ENCODE measurements at regions of chr12 and their contacts with region 1.

Region 1: DNA sequence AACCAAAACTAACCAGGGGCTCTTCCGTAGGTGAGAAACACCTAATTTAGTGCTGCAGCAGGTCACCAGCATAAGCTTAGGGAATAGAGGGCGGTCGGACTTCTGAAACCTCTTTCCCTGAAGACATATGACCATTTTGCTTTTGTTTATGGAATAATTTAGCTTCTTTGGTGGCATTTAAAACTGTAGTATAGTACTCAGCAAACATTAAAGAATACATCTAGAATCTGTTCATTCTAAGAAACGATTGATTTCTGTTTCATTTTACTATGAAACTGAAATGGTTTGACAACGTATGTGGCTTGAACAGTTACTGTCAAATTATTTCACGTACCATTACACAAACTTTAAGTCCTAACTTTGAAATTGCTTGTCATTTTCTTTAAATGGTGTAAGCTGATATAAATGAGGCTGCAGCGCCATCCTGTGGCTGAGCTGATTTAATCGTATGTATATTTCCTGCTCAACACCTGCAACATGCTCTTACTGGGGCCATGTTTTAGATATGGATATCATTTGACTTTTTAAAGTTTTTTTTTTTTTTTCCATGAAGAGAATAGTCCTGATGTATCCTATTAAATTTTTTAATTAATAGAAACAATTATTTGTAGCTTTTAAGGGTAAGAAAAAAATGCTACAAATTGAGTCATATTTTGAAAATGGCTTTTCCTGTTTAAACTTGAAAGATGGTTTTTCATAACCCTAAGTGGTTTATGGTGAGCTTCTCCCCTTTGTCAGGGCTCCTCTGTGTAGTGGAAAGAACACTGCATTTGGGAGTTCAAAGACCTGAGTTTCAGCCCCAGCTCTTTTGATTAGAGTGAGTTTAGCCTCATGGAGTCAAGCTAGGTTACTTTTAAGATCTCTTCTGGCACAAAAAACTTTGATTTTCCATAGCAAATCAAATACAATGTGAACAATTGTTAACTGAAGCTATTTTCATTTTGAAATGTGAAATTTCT is 27.4 kb downstream of the CFAP54 start:
- DNase-seq: peak; percentile 87
- ATAC-seq: peak; percentile 65
- H3K4me3 ChIP-seq: peak overlapping the region in 1 of 5 experiments; percentile 22
- H3K4me3 Mint-ChIP-seq: no peak overlapping the region
- H3K27ac ChIP-seq: no peak overlapping the region
- H3K27ac Mint-ChIP-seq: no peak overlapping the region
- H3K4me1 ChIP-seq: peaks cover 14 to 16% of the 10 kb centered on the region in 2 donors
- H3K4me1 Mint-ChIP-seq: peaks cover 21% of the 10 kb centered on the region
- H3K27me3 ChIP-seq: no peaks in the 10 kb centered on the region
- H3K27me3 Mint-ChIP-seq: no peaks in the 10 kb centered on the region
- CTCF ChIP-seq: peak; percentile 84

Region 2: GRCh38 chr12:95918194-95918993 is 598.4 kb before region 1 on chr12:
- CTCF ChIA-PET with region 1: interaction called, 47 read pairs
- POLR2A ChIA-PET with region 1: no interaction called
- intact Hi-C with region 1: loop called (anchors 1 kb)
- DNase-seq: peak; percentile 70
- ATAC-seq: peak; percentile 90
- H3K4me3 ChIP-seq: no peak overlapping the region
- H3K4me3 Mint-ChIP-seq: no peak overlapping the region
- H3K27ac ChIP-seq: no peak overlapping the region
- H3K27ac Mint-ChIP-seq: no peak overlapping the region
- H3K4me1 ChIP-seq: peaks cover 4% of the 10 kb centered on the region in 2 donors
- H3K4me1 Mint-ChIP-seq: no peaks in the 10 kb centered on the region
- H3K27me3 ChIP-seq: peaks cover 0 to 2% (median 0%) of the 10 kb centered on the region in 4 experiments
- H3K27me3 Mint-ChIP-seq: peaks cover 3% of the 10 kb centered on the region
- CTCF ChIP-seq: peak; percentile 88

Region 3: GRCh38 chr12:96208801-96209549 is 307.8 kb before region 1 on chr12:
- CTCF ChIA-PET with region 1: interaction called, 79 read pairs
- POLR2A ChIA-PET with region 1: interaction called, 4 read pairs
- intact Hi-C with region 1: no loop called
- DNase-seq: peak; percentile 81
- ATAC-seq: peak; percentile 87
- H3K4me3 ChIP-seq: peak overlapping the region in 1 of 5 experiments; percentile 34
- H3K4me3 Mint-ChIP-seq: peak overlapping the region; percentile 81
- H3K27ac ChIP-seq: peak overlapping the region; percentile 46 to 68
- H3K27ac Mint-ChIP-seq: peak overlapping the region; percentile 90
- H3K4me1 ChIP-seq: peaks cover 95 to 98% of the 10 kb centered on the region in 2 donors
- H3K4me1 Mint-ChIP-seq: peaks cover 91% of the 10 kb centered on the region
- H3K27me3 ChIP-seq: no peaks in the 10 kb centered on the region
- H3K27me3 Mint-ChIP-seq: no peaks in the 10 kb centered on the region
- CTCF ChIP-seq: no peak

Region 4: GRCh38 chr12:96274331-96274730 is 242.4 kb before region 1 on chr12:
- CTCF ChIA-PET with region 1: interaction called, 6 read pairs
- POLR2A ChIA-PET with region 1: no interaction called
- intact Hi-C with region 1: loop called (anchors 10 kb)
- DNase-seq: no peak
- ATAC-seq: no peak
- H3K4me3 ChIP-seq: no peak overlapping the region
- H3K4me3 Mint-ChIP-seq: no peak overlapping the region
- H3K27ac ChIP-seq: peak overlapping the region in 1 of 2 donors; percentile 35
- H3K27ac Mint-ChIP-seq: no peak overlapping the region
- H3K4me1 ChIP-seq: no peaks in the 10 kb centered on the region
- H3K4me1 Mint-ChIP-seq: peaks cover 13% of the 10 kb centered on the region
- H3K27me3 ChIP-seq: no peaks in the 10 kb centered on the region
- H3K27me3 Mint-ChIP-seq: no peaks in the 10 kb centered on the region
- CTCF ChIP-seq: no peak

Region 5: DNA sequence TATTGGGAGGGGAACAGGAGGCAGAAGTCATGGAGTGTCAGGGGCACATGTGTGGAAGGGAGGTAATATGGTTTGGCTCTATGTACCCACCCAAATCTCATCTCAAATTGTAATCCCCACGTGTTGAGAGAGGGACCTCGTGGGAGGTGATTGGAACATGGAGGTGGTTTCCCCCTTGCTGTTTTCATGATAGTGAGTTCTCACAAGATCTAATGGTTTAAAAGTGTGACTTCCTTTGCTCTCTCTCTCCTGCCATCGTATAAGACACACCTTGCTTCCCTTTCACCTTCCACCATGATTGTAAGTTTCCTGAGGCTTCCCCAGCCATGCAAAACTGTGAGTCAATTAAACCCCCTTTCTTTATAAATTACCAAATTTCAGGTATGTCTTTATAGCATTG is 74.9 kb before region 1 on chr12:
- CTCF ChIA-PET with region 1: no interaction called
- POLR2A ChIA-PET with region 1: no interaction called
- intact Hi-C with region 1: no loop called
- DNase-seq: no peak
- ATAC-seq: no peak
- H3K4me3 ChIP-seq: no peak overlapping the region
- H3K4me3 Mint-ChIP-seq: no peak overlapping the region
- H3K27ac ChIP-seq: no peak overlapping the region
- H3K27ac Mint-ChIP-seq: no peak overlapping the region
- H3K4me1 ChIP-seq: peaks cover 13 to 14% of the 10 kb centered on the region in 2 donors
- H3K4me1 Mint-ChIP-seq: peaks cover 15% of the 10 kb centered on the region
- H3K27me3 ChIP-seq: no peaks in the 10 kb centered on the region
- H3K27me3 Mint-ChIP-seq: no peaks in the 10 kb centered on the region
- CTCF ChIP-seq: no peak

Region 6: GRCh38 chr12:96495841-96496545 is 20.8 kb before region 1 on chr12:
- CTCF ChIA-PET with region 1: interaction called, 55 read pairs
- POLR2A ChIA-PET with region 1: no interaction called
- intact Hi-C with region 1: no loop called
- DNase-seq: no peak
- ATAC-seq: no peak
- H3K4me3 ChIP-seq: no peak overlapping the region
- H3K4me3 Mint-ChIP-seq: no peak overlapping the region
- H3K27ac ChIP-seq: no peak overlapping the region
- H3K27ac Mint-ChIP-seq: no peak overlapping the region
- H3K4me1 ChIP-seq: peaks cover 15 to 16% of the 10 kb centered on the region in 2 donors
- H3K4me1 Mint-ChIP-seq: peaks cover 15% of the 10 kb centered on the region
- H3K27me3 ChIP-seq: no peaks in the 10 kb centered on the region
- H3K27me3 Mint-ChIP-seq: no peaks in the 10 kb centered on the region
- CTCF ChIP-seq: no peak

Region 7: GRCh38 chr12:96698521-96698920 is 181.8 kb after region 1 on chr12:
- CTCF ChIA-PET with region 1: no interaction called
- POLR2A ChIA-PET with region 1: no interaction called
- intact Hi-C with region 1: no loop called
- DNase-seq: no peak
- ATAC-seq: no peak
- H3K4me3 ChIP-seq: peak overlapping the region in 2 of 5 experiments; percentile 12 to 15
- H3K4me3 Mint-ChIP-seq: peak overlapping the region; percentile 24
- H3K27ac ChIP-seq: no peak overlapping the region
- H3K27ac Mint-ChIP-seq: no peak overlapping the region
- H3K4me1 ChIP-seq: no peaks in the 10 kb centered on the region
- H3K4me1 Mint-ChIP-seq: peaks cover 1% of the 10 kb centered on the region
- H3K27me3 ChIP-seq: peaks cover 0 to 3% (median 0%) of the 10 kb centered on the region in 4 experiments
- H3K27me3 Mint-ChIP-seq: peaks cover 26% of the 10 kb centered on the region
- CTCF ChIP-seq: no peak